Mammary epithelial cell (primary cell): ENCODE measurements at regions of chr3 and their contacts with region 1.

Region 1: DNA sequence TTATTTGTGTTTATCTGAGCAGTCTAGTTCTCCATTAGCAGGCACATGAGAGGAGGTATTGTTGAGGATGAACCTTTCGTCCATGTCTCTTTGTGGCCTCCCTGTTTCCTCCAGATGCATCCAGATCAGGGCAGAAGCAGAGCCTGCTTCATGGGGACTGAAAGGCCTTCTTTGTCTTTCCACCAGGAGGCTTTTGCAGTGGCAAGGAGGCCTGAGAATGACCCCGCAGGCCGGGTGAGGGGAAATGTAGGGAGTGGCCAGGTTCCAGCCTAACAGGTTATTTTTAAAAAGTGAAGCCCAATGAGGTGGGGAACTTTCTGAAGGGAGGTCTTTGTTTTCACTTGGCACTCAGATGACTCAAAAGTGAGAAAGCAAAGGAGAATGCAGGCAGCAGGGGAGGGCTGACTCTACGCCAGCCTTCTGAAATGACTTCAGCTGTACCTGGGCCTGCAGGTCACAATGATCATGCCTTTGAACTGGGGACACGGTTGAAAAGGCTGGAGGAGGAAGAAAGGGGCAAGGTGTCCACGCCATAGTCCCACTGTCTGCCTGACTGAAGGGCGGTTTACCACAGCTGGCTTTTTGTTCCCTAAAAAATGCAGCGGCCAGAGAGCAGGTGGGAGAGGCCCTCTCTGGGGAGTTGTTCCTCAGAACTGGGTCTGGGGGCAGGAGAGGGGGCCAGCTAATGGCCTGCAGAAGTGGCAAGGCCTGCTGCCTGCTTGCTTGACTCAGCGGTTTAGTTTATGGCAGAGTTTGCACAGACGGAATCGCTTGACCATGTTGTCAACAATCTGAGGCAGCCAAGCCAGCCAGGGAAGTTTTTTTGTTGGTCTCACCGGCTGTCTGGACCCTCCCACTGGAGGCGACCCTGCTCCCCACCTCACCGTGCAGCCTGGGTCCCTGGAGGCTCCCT is 28.7 kb downstream of the CMTM7 start:
- DNase-seq: peak; percentile 98
- H3K4me3 ChIP-seq: peak overlapping the region in 1 of 3 experiments; percentile 5
- H3K27ac ChIP-seq: peak overlapping the region; percentile 95
- H3K4me1 ChIP-seq: peaks cover 54% of the 10 kb centered on the region
- H3K27me3 ChIP-seq: no peaks in the 10 kb centered on the region
- CTCF ChIP-seq: peak; percentile 37 to 46

Region 2: GRCh38 chr3:32374788-32375595 is 45.4 kb before region 1 on chr3:
- CTCF ChIA-PET with region 1: no interaction called
- dilution Hi-C with region 1: no loop called
- in situ Hi-C with region 1: no loop called
- intact Hi-C with region 1: loop called (anchors 1 kb)
- DNase-seq: peak; percentile 66
- H3K4me3 ChIP-seq: no peak overlapping the region
- H3K27ac ChIP-seq: no peak overlapping the region
- H3K4me1 ChIP-seq: peaks cover 10% of the 10 kb centered on the region
- H3K27me3 ChIP-seq: no peaks in the 10 kb centered on the region
- CTCF ChIP-seq: peak; percentile 50 to 68

Region 3: GRCh38 chr3:32391643-32392535 is 28.5 kb before region 1 on chr3 and contains the start of gene CMTM7:
- CTCF ChIA-PET with region 1: no interaction called
- dilution Hi-C with region 1: no loop called
- in situ Hi-C with region 1: no loop called
- intact Hi-C with region 1: loop called (anchors 1 kb)
- DNase-seq: peak; percentile 80
- H3K4me3 ChIP-seq: peak within 1 kb of the TSS; percentile 84 to 87 (median 84)
- H3K27ac ChIP-seq: peak within 1 kb of the TSS; percentile 73
- H3K4me1 ChIP-seq: peaks cover 21% of the 10 kb centered on the region
- H3K27me3 ChIP-seq: no peaks in the 10 kb centered on the region
- CTCF ChIP-seq: peak in 1 of 2 donors; percentile 14
- total RNA-seq, gene CMTM7: 35.8 to 62.1 TPM

Region 4: DNA sequence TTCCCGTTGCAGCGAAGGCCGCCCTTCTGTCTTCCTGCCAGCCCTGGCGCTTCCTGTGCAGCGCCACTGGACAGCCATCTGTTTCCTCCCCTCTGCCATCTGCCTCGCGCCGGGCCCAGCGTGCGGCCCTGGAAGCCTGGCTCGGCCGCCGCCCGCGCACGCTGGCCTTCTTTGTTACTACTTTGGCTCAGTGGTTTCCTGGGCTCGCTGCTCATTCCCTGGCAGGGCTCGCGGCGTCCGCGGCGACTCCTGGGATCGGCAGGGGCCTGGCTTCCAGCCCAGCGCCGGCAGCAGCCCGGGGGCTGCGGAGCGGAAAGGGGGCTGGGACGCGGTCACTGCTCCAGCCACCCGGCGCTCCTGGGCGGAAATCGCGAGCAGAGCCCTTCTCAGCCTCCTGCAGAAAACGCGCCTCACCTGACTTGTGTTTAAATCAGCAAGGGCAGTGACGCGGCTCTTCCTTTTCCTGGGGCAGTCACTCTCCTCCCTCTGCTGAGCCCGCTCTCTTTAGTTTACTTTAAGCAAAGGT is 18.8 kb before region 1 on chr3:
- CTCF ChIA-PET with region 1: no interaction called
- dilution Hi-C with region 1: no loop called
- in situ Hi-C with region 1: no loop called
- intact Hi-C with region 1: loop called (anchors 1 kb)
- DNase-seq: peak; percentile 71
- H3K4me3 ChIP-seq: peak overlapping the region; percentile 37 to 45 (median 40)
- H3K27ac ChIP-seq: peak overlapping the region; percentile 66
- H3K4me1 ChIP-seq: peaks cover 61% of the 10 kb centered on the region
- H3K27me3 ChIP-seq: no peaks in the 10 kb centered on the region
- CTCF ChIP-seq: no peak

Region 5: GRCh38 chr3:32443478-32443877 is 23.1 kb after region 1 on chr3:
- CTCF ChIA-PET with region 1: no interaction called
- dilution Hi-C with region 1: no loop called
- in situ Hi-C with region 1: no loop called
- intact Hi-C with region 1: loop called (anchors 1 kb)
- DNase-seq: peak; percentile 96
- H3K4me3 ChIP-seq: no peak overlapping the region
- H3K27ac ChIP-seq: peak overlapping the region; percentile 59
- H3K4me1 ChIP-seq: peaks cover 53% of the 10 kb centered on the region
- H3K27me3 ChIP-seq: no peaks in the 10 kb centered on the region
- CTCF ChIP-seq: no peak